CD8-positive, alpha-beta memory T cell (primary cell): ENCODE measurements at regions of chr1 and their contacts with region 1.

Region 1: GRCh38 chr1:6401673-6402072 is 8.1 kb upstream of the ACOT7 start:
- DNase-seq: no peak
- H3K4me3 ChIP-seq: no peak overlapping the region
- H3K4me3 Mint-ChIP-seq: no peak overlapping the region
- H3K27ac ChIP-seq: no peak overlapping the region
- H3K27ac Mint-ChIP-seq: no peak overlapping the region
- H3K4me1 ChIP-seq: no peaks in the 10 kb centered on the region
- H3K4me1 Mint-ChIP-seq: peaks cover 0 to 4% (median 3%) of the 10 kb centered on the region in 3 donors
- H3K27me3 ChIP-seq: no peaks in the 10 kb centered on the region
- H3K27me3 Mint-ChIP-seq: peaks cover 11% of the 10 kb centered on the region in 2 donors

Region 2: GRCh38 chr1:6245086-6245868 is 156.4 kb before region 1 on chr1:
- CTCF ChIA-PET with region 1: interaction called, 63 read pairs
- POLR2A ChIA-PET with region 1: no interaction called
- DNase-seq: peak; percentile 70 to 85 (median 72)
- H3K4me3 ChIP-seq: peak overlapping the region; percentile 19
- H3K4me3 Mint-ChIP-seq: no peak overlapping the region
- H3K27ac ChIP-seq: no peak overlapping the region
- H3K27ac Mint-ChIP-seq: no peak overlapping the region
- H3K4me1 ChIP-seq: peaks cover 20% of the 10 kb centered on the region
- H3K4me1 Mint-ChIP-seq: peaks cover 8 to 29% (median 11%) of the 10 kb centered on the region in 3 donors
- H3K27me3 ChIP-seq: peaks cover 62% of the 10 kb centered on the region
- H3K27me3 Mint-ChIP-seq: peaks cover 49 to 61% of the 10 kb centered on the region in 2 donors

Region 3: GRCh38 chr1:6412895-6413294 is 11.2 kb after region 1 on chr1:
- CTCF ChIA-PET with region 1: no interaction called
- POLR2A ChIA-PET with region 1: no interaction called
- DNase-seq: no peak
- H3K4me3 ChIP-seq: no peak overlapping the region
- H3K4me3 Mint-ChIP-seq: no peak overlapping the region
- H3K27ac ChIP-seq: no peak overlapping the region
- H3K27ac Mint-ChIP-seq: no peak overlapping the region
- H3K4me1 ChIP-seq: peaks cover 5% of the 10 kb centered on the region
- H3K4me1 Mint-ChIP-seq: peaks cover 2 to 5% (median 3%) of the 10 kb centered on the region in 3 donors
- H3K27me3 ChIP-seq: peaks cover 38% of the 10 kb centered on the region
- H3K27me3 Mint-ChIP-seq: peaks cover 53 to 64% of the 10 kb centered on the region in 2 donors